MCF 10A (cell line): ENCODE measurements at regions of chr9 and their contacts with region 1.

Region 1: DNA sequence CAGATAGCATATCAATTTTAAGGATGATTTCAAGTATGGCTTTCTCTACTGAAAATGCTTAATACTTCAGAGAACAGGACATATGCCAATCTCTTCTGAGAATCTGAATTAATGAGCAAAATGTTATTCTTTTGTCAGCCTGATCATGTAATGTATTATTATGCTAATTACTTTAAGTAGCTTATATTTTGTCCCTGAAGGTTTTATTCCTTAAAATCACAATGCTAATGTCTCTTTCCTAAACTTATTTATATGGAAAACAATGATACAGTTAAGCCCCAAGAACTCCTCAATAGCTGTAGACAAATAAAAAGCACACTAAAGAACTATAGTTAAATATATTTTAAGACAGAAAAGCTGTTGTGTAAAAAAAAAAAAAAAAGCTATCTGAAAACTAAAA is 256.9 kb upstream of the PTPRD start:
- DNase-seq: no peak
- H3K4me3 Mint-ChIP-seq: no peak overlapping the region
- H3K27ac Mint-ChIP-seq: no peak overlapping the region
- H3K4me1 Mint-ChIP-seq: no peaks in the 10 kb centered on the region
- H3K27me3 Mint-ChIP-seq: no peaks in the 10 kb centered on the region
- CTCF ChIP-seq: no peak

Region 2: DNA sequence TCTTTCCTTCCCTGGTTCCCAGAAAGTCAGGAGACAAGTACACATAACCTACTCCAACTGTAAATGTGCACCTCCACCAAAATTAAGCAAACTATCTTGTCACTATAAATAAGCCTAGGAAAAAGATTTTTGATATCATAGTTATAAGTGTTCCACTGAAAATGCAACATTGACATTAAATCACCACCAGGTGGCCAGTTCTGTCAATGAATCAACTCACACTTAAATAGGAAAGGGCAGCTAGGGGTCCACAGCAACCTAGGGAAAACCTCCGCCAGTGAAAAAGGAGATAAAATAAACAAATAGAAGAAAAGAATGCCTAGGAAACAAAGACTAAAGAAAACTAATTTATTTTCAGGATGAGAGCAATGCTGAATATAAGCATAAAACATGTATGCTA is 13.8 kb before region 1 on chr9:
- CTCF ChIA-PET with region 1: interaction called, 11 read pairs
- POLR2A ChIA-PET with region 1: no interaction called
- intact Hi-C with region 1: no loop called
- DNase-seq: peak; percentile 26
- H3K4me3 Mint-ChIP-seq: no peak overlapping the region
- H3K27ac Mint-ChIP-seq: no peak overlapping the region
- H3K4me1 Mint-ChIP-seq: no peaks in the 10 kb centered on the region
- H3K27me3 Mint-ChIP-seq: peaks cover 19% of the 10 kb centered on the region
- CTCF ChIP-seq: peak; percentile 58

Region 3: GRCh38 chr9:10903969-10904368 is 34.3 kb after region 1 on chr9:
- CTCF ChIA-PET with region 1: no interaction called
- POLR2A ChIA-PET with region 1: no interaction called
- intact Hi-C with region 1: no loop called
- DNase-seq: no peak
- H3K4me3 Mint-ChIP-seq: no peak overlapping the region
- H3K27ac Mint-ChIP-seq: no peak overlapping the region
- H3K4me1 Mint-ChIP-seq: no peaks in the 10 kb centered on the region
- H3K27me3 Mint-ChIP-seq: no peaks in the 10 kb centered on the region
- CTCF ChIP-seq: no peak